ENCODE measurements at regions of chr20 and their contacts with region 1.

Region 1: DNA sequence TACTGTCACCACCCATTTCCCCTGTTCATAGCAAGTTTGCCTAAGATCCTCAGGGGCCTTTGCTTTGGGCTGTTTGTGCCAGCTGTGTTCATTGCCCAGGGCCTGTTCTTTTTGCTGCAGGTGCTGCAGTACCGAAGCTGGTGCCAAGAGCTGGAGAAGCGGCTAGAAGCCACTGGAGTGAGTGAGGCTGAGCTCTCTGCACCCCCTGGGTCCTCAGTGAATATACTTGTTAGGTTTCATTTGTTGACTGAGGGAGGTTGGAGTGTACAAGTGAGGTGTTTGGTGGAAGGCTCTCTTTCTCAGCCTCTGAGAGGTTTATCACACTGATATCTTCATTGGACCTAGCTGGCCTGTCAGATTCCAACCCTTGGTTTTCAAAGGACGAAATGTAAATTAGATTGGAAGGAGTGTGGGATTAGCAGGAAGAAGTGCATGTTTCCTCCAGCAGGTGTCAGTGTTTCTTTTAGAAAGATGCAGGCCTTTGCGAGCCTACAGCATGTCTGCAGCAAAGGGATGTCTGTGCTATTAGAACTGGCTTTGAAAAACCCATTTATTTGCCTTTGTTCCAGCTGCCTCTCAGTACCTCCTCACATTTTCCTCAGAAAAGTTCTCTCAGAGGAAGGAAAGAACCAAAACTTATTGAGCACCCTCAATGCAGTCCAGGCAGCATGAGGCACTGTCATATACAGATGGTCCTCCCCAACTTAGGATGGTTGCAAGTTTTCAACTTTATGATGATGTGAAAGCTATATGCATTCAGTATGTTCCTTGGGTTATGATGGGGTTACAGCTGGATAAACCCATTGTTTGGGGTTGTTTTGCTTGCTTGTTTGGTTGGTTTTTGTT is 8.3 kb downstream of the CEP250 start:
- H3K4me3 Mint-ChIP-seq: no peak overlapping the region
- H3K27ac Mint-ChIP-seq: no peak overlapping the region
- H3K4me1 Mint-ChIP-seq: no peaks in the 10 kb centered on the region
- H3K27me3 Mint-ChIP-seq: no peaks in the 10 kb centered on the region

Region 2: GRCh38 chr20:35523298-35523888 is 59.7 kb after region 1 on chr20:
- intact Hi-C with region 1: loop called (anchors 5 kb)
- H3K4me3 Mint-ChIP-seq: no peak overlapping the region
- H3K27ac Mint-ChIP-seq: no peak overlapping the region
- H3K4me1 Mint-ChIP-seq: no peaks in the 10 kb centered on the region
- H3K27me3 Mint-ChIP-seq: no peaks in the 10 kb centered on the region

Measured in dendritic cell treated with granulocyte-macrophage colony-stimulating factor and Interleukin-4, amounts not matched to agents 40 ng/mL and 50 ng/mL, for 4 days (primary cell).